Dendritic cell treated with granulocyte-macrophage colony-stimulating factor and Interleukin-4, amounts not matched to agents 40 ng/mL and 50 ng/mL, for 4 days (primary cell): ENCODE measurements at regions of chr7 and their contacts with region 1.

Region 1: GRCh38 chr7:117673839-117674238 is 194.0 kb downstream of the CFTR start:
- H3K4me3 Mint-ChIP-seq: no peak overlapping the region
- H3K27ac Mint-ChIP-seq: no peak overlapping the region
- H3K4me1 Mint-ChIP-seq: no peaks in the 10 kb centered on the region
- H3K27me3 Mint-ChIP-seq: peaks cover 5% of the 10 kb centered on the region

Region 2: DNA sequence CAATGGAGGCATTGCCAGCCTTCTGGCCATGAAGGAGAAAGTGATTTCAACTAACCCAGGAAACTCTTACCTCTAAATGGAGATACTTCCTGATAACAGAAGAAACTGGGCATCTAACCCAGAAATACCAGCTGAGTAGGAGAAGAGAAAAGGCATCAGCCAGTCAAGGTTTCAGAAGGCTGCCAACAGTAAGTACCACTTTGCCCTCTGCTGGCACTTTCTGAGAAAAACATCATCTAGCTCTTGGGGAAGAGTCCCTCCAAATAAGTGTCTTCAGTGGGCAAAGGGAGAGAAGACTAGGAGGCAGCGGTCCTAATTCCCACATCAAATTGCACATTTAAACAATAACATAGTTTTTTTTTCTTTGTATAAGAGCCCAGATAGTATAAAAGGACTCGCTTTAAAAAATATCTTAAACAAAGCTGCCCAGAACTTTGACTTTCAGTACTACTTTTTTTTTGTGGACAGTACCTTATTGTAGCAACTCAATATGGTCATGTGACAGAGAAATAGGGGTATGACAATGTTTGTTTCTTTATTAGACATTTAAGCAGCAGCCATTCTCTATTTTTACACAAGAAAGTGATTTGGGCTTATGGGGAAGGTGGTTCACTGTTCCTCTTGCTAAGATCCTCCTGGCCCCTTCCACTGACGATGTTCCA is 42.1 kb after region 1 on chr7:
- intact Hi-C with region 1: loop called (anchors 1 kb)
- H3K4me3 Mint-ChIP-seq: no peak overlapping the region
- H3K27ac Mint-ChIP-seq: no peak overlapping the region
- H3K4me1 Mint-ChIP-seq: peaks cover 28% of the 10 kb centered on the region
- H3K27me3 Mint-ChIP-seq: peaks cover 6% of the 10 kb centered on the region